AG04450 (cell line): ENCODE measurements at regions of chr1 and their contacts with region 1.

Region 1: DNA sequence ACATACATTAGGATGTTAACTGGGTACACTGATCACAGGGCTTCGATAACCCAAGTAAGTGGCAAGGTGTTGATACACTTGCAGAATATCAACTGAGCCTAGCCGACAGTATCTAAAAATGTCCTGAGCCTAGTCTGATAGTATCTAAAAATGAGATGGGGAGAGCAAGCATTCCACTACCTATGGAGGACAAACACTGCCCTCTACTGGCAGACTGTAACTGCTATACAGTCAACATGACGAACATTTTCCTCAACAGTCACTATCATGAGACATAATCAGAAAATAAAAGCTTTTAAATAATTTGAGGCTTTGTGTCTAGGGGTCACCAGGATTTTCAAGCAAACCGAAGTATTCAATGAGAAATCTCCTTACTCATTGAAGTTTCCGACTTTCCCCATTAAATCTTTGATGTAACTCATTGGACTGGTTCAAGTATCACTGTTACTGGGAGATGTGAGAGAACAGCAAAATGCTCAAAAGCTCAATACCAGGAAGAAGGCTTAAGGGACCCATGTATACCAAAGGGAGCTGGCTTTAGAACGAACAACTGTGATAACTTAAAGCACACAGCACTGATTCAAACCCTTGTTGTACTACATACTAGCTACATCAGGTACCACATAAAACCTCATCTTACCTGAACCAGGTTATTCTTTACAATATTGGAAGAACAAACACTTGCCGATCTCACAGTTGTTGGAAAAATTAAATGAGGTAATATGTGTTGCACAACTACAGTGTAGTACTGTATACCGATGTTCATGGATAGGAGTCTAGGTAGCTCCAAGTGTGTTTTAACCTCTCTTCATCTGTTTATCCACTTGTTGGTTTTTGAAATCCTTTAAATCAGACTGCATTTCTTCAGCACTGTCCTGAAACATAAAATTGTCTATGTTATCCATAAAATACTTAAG is 31.1 kb upstream of the SLC45A3 start:
- DNase-seq: peak; percentile 66
- H3K4me3 ChIP-seq: no peak overlapping the region
- H3K27ac ChIP-seq: no peak overlapping the region
- H3K27me3 ChIP-seq: no peaks in the 10 kb centered on the region
- CTCF ChIP-seq: peak; percentile 90

Region 2: GRCh38 chr1:205543411-205544301 is 167.7 kb before region 1 on chr1:
- CTCF ChIA-PET with region 1: no interaction called
- POLR2A ChIA-PET with region 1: no interaction called
- DNase-seq: peak; percentile 26
- H3K4me3 ChIP-seq: peak overlapping the region; percentile 44
- H3K27ac ChIP-seq: peak overlapping the region; percentile 25
- H3K27me3 ChIP-seq: peaks cover 25% of the 10 kb centered on the region
- CTCF ChIP-seq: no peak

Region 3: DNA sequence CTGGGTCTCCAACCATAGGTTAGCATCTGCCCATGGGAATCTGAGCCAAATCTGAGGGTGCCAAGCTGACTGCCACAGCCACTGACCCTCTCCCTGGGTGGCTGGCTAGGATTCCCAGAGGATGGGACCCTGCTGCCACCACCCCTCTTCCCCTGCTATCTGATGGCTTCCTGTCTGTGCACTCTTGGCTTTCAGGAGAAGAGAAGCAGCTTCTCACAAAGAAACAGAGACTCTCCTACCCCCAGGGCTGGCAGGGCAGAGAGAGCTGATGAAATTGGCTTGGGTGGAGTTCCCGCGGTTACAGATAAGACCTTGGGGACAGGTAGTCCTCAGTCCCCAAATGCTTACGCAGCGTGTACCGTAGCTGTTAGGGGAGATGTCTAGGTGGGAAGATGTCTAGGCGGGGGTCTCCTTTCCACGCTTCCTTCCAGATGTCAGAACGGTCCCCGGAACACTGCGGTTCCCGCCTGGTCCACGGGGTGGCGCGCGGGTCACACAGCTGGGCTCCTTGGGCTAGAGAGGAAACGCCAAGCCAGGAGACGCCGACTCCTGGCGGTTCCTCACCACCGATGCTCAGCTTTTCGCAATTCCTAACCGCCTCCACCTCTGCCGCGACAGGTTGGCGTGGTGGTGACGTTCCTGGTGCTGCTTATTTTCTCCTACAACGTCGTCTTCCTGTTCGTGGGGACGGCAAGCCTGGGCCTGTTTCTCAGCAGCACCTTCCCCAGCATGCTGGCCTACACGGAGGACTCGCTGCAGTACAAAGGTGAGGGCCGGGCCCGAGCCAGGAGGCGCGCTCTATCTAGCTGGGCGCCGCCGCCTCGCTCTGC is 119.6 kb before region 1 on chr1:
- CTCF ChIA-PET with region 1: interaction called, 64 read pairs
- POLR2A ChIA-PET with region 1: no interaction called
- DNase-seq: no peak
- H3K4me3 ChIP-seq: peak overlapping the region; percentile 55
- H3K27ac ChIP-seq: no peak overlapping the region
- H3K27me3 ChIP-seq: no peaks in the 10 kb centered on the region
- CTCF ChIP-seq: peak; percentile 99

Region 4: DNA sequence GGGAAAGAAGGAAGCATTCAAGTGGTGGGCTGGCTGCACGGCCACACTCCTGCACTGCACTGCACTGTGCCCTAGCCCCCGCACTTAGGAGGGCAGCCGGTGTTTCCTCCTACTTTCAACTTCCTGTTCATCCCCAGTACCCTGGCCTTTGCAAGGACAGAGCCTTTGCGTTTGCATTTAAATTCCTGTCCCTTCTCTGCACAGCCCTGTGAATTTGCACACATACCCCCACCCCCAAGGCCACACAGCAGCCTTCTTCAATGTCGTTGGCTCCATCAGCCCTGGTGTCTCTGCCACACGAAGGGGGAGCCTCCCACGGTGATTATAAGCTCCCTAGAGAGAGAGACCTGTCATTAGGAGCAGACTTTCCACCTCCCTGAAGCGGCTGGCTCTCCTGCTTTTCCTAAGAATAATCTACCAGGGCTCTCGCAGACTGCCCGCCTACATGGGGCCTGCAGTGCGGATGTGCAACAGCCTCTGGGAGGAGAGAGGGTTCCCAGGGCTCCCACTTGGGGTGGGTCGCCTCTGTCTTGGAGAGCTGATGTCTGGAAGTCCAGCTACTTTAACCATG is 17.9 kb before region 1 on chr1:
- CTCF ChIA-PET with region 1: interaction called, 12 read pairs
- POLR2A ChIA-PET with region 1: no interaction called
- DNase-seq: no peak
- H3K4me3 ChIP-seq: no peak overlapping the region
- H3K27ac ChIP-seq: no peak overlapping the region
- H3K27me3 ChIP-seq: peaks cover 3% of the 10 kb centered on the region
- CTCF ChIP-seq: no peak

Region 5: GRCh38 chr1:205739348-205740160 is 28.2 kb after region 1 on chr1:
- CTCF ChIA-PET with region 1: interaction called, 46 read pairs
- POLR2A ChIA-PET with region 1: no interaction called
- DNase-seq: peak; percentile 76
- H3K4me3 ChIP-seq: no peak overlapping the region
- H3K27ac ChIP-seq: no peak overlapping the region
- H3K27me3 ChIP-seq: no peaks in the 10 kb centered on the region
- CTCF ChIP-seq: peak; percentile 52

Region 6: DNA sequence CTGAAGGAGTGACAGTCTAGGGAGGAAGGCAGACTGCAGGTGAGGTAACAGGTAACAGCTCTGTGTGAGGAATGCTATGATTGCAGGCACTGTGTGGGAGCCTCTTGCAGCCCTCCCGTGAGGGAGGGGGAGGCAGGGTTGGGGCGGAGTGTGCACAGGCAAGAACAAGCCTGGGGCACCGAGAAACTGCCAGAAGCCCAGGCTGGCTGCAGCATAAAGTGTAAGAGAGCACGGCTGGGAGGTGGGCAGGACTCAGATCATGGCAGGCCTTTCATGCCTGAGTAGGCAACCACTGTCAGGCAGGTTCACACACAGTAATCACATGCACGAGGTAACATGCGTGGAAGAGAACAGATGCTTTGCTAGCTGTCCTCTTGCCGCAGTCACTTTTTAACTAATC is 330.3 kb after region 1 on chr1:
- CTCF ChIA-PET with region 1: no interaction called
- POLR2A ChIA-PET with region 1: no interaction called
- DNase-seq: no peak
- H3K4me3 ChIP-seq: no peak overlapping the region
- H3K27ac ChIP-seq: no peak overlapping the region
- H3K27me3 ChIP-seq: peaks cover 41% of the 10 kb centered on the region
- CTCF ChIP-seq: no peak

Region 7: DNA sequence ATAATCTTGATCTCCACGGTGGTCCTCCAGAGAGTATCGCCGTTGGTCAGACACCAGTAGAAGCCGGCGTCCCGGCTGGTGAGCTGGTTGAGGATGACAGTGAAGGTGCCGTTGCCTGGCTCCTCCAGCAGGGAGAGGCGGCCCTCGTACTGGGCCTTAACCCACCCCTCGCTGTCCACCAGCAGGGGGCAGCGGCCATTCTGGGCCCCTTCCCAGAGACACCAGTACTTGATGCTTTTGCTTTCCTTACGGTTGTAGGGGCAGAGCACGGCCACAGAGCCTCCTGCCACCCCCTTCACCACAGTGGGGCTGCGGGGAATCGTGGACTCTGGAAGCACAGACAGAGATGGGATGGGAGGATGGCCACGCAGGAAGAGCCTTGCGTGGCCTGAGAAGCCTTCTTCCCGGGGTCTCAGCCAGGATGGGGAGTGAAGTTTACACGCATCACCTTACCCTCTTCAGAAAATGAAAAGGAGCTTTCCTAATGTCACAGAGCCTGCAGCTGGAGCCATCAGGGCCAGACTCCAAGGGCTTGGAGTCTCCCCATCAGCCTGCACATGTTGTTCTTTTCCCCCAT is 1224.2 kb after region 1 on chr1:
- CTCF ChIA-PET with region 1: no interaction called
- POLR2A ChIA-PET with region 1: no interaction called
- DNase-seq: peak; percentile 2
- H3K4me3 ChIP-seq: no peak overlapping the region
- H3K27ac ChIP-seq: no peak overlapping the region
- H3K27me3 ChIP-seq: peaks cover 22% of the 10 kb centered on the region
- CTCF ChIP-seq: peak; percentile 58